Right lobe of liver (tissue), 6 donors: ENCODE measurements at regions of chr20 and their contacts with region 1.

Region 1: DNA sequence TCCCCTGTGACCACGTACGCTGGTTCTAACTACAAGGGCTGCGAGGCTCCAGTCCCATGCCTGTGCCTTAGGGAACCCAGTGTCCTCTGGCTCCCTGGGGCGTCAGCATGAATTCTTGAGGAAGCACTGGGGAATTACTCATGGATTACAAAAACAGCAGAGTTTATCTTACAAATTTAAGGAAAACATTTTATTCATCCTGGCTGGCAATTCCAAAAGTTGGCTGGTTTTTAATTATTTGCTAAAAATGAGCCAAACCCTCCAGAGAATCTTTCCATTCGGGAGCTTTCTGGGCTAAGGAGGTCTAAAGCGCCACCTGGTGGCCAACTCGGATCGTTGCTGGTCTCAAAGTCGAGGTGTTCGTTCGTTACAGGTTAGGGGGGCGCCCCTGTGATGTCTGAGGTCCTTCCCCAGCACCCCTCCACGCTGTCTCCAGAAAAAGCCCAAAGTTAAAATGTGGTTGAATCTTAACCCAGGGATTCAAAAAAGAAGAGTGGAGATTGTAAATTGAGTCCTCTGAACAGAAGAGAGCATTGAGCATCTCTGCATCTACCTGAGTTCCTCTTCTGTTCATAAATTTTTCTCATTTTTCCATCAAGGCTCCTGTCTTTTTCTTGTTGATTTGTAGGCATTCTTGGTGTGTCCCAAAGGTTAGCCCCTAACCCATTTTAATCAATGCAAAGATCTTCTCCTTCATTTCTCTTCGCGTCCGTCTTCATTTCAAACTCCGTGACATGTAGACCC is 99.4 kb downstream of the BFSP1 start:
- DNase-seq: peak in 2 of 3 donors; percentile 49 to 57
- ATAC-seq: peak; percentile 49 to 63 (median 56)
- H3K4me3 ChIP-seq: no peak overlapping the region
- H3K27ac ChIP-seq: no peak overlapping the region
- H3K4me1 ChIP-seq: no peaks in the 10 kb centered on the region
- H3K27me3 ChIP-seq: peaks cover 0 to 10% of the 10 kb centered on the region in 2 donors
- CTCF ChIP-seq: peak; percentile 55 to 92 (median 88)
- POLR2A ChIP-seq: no peak

Region 2: DNA sequence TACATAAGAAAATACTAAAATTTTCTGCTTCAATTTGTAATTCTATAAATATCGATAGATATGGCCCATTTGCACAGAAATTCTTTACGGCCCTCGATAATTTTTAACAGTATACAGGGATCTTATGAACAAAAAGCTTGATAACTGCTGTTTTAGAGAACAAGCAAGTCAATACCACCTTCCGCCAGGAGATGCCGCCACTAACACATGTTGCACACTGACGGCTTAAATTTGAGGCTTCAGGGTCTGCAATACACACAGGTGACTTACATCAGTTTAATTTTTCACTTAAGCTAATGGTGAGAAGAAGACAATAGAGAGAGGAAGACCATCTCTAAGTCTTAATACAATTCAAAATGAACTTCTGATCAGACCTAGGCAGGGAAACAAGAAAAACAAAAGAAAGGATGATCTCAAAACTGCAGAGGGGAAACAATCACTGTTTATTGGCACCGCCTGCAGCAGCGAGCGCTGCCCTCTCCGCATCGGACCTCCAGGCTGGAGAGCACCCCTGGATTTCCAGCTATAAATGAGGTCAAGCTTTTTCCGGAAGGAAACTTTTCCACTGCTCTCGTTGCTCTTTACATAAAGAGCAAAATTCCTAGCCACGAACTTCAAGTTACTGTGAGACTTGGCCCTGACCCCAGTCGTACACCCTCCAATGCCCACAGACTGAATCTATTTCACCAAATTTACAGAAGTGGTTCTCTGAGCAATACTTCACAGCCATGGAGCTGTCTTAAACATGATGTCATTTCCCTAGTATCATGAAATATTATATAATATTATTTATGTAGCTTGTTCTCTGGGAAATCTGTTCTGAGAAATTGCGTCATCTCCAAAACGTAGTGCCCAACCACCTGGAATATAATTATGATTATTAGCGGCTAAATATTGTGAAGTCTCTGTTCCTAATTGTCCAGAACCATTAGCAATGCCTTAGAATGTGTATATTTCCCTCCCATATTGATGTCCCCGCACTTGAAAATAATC is 629.6 kb before region 1 on chr20:
- intact Hi-C with region 1: loop called (anchors 5 kb)
- DNase-seq: peak in 2 of 3 donors; percentile 52
- ATAC-seq: peak; percentile 64 to 71 (median 67)
- H3K4me3 ChIP-seq: no peak overlapping the region
- H3K27ac ChIP-seq: no peak overlapping the region
- H3K4me1 ChIP-seq: no peaks in the 10 kb centered on the region
- H3K27me3 ChIP-seq: peaks cover 0 to 5% of the 10 kb centered on the region in 2 donors
- CTCF ChIP-seq: peak; percentile 64 to 86 (median 81)
- POLR2A ChIP-seq: no peak

Region 3: DNA sequence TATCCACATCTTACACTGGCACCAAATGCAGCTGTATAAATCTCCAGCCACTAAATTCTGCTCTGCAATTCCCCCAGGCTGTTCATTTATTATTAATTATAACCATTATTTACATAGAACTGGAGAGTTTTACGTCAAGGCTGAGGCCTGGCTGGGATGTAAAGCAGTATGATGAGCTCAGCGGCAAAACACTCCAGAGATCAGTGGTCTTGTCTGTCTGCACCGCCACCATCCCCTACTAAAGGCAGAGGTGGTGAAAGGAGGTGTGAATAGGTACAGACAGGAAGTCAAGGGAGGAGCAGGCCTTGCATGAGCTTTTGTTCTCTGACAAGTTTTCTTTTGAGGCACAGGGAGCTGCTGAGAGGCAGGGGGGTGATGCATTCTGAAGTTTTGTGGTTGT is 364.9 kb before region 1 on chr20:
- intact Hi-C with region 1: no loop called
- DNase-seq: no peak
- ATAC-seq: no peak
- H3K4me3 ChIP-seq: no peak overlapping the region
- H3K27ac ChIP-seq: no peak overlapping the region
- H3K4me1 ChIP-seq: no peaks in the 10 kb centered on the region
- H3K27me3 ChIP-seq: no peaks in the 10 kb centered on the region
- CTCF ChIP-seq: no peak
- POLR2A ChIP-seq: no peak